Activated CD4-positive, alpha-beta T cell treated with anti-CD3 and anti-CD28 coated beads for 36 hours (primary cell): ENCODE measurements at regions of chr2 and their contacts with region 1.

Region 1: GRCh38 chr2:74334931-74335333 is 8.3 kb downstream of the SLC4A5 start:
- DNase-seq: peak; percentile 86
- ATAC-seq: peak; percentile 81
- H3K4me3 Mint-ChIP-seq: no peak overlapping the region
- H3K27ac Mint-ChIP-seq: no peak overlapping the region
- H3K4me1 Mint-ChIP-seq: no peaks in the 10 kb centered on the region
- H3K27me3 Mint-ChIP-seq: no peaks in the 10 kb centered on the region

Region 2: DNA sequence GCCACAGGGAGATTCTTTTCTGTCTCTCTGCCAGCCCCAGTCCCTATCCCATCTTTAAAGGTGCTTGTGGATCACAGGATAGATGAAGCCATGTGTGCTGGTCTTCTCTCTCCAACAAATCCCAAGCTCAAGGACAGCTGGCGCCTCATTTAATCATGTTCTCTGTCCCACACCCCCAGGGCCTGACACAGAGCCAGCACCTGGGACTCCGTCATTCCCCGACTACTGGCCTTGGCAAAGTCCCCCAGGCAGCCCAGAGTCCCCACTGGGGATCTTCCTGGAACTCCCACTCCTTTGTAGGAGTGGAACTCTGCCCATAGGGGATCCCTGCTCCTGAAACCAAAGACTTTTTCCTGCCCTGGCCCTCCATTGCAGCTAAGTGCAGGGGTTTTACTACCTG is 75.7 kb before region 1 on chr2:
- CTCF ChIA-PET with region 1: interaction called, 22 read pairs
- POLR2A ChIA-PET with region 1: no interaction called
- intact Hi-C with region 1: no loop called
- DNase-seq: no peak
- ATAC-seq: no peak
- H3K4me3 Mint-ChIP-seq: no peak overlapping the region
- H3K27ac Mint-ChIP-seq: no peak overlapping the region
- H3K4me1 Mint-ChIP-seq: no peaks in the 10 kb centered on the region
- H3K27me3 Mint-ChIP-seq: no peaks in the 10 kb centered on the region

Region 3: DNA sequence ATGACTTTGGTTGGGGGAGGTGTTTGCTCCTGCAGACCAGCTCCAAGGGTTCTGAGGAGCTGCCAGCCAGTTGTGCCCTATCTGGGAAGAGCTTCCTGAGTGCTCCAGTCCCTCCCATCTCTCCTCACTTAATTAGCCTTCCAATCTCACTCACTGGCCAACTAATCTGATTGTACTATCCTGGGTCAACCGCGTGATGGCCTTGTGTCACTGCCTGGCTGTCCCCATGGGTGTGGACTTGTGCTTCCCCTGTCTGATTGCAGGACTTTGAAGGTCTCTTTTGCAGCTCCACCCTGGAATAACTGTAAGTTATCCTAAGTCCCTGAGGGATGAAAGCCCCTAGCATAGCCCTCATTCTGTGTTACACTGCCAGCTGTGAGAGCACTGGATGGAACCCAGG is 56.8 kb before region 1 on chr2:
- CTCF ChIA-PET with region 1: interaction called, 18 read pairs
- POLR2A ChIA-PET with region 1: no interaction called
- intact Hi-C with region 1: no loop called
- DNase-seq: no peak
- ATAC-seq: no peak
- H3K4me3 Mint-ChIP-seq: no peak overlapping the region
- H3K27ac Mint-ChIP-seq: no peak overlapping the region
- H3K4me1 Mint-ChIP-seq: no peaks in the 10 kb centered on the region
- H3K27me3 Mint-ChIP-seq: no peaks in the 10 kb centered on the region

Region 4: GRCh38 chr2:74321737-74322136 is 13.2 kb before region 1 on chr2:
- CTCF ChIA-PET with region 1: interaction called, 33 read pairs
- POLR2A ChIA-PET with region 1: no interaction called
- intact Hi-C with region 1: no loop called
- DNase-seq: no peak
- ATAC-seq: no peak
- H3K4me3 Mint-ChIP-seq: no peak overlapping the region
- H3K27ac Mint-ChIP-seq: no peak overlapping the region
- H3K4me1 Mint-ChIP-seq: no peaks in the 10 kb centered on the region
- H3K27me3 Mint-ChIP-seq: no peaks in the 10 kb centered on the region

Region 5: DNA sequence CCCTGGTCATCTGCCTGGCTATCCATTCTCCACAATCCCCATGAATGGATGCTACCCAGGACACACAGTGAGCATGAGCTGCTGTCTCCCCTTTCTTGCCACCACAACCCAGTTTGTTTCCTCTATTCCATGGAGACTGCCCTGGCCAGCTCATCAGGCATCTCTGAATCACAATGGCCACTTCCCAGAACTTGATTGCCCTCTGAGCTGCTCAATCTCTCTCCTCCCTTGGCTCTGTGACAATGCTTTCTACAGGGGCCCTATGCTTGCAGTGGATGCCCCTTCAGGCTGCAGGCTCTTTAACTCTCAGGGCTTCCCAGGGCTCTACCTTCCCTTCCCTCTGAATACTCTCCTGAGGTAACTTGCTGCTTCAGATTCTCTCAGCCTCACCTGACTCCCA is 22.7 kb after region 1 on chr2:
- CTCF ChIA-PET with region 1: interaction called, 23 read pairs
- POLR2A ChIA-PET with region 1: no interaction called
- intact Hi-C with region 1: no loop called
- DNase-seq: no peak
- ATAC-seq: no peak
- H3K4me3 Mint-ChIP-seq: no peak overlapping the region
- H3K27ac Mint-ChIP-seq: no peak overlapping the region
- H3K4me1 Mint-ChIP-seq: no peaks in the 10 kb centered on the region
- H3K27me3 Mint-ChIP-seq: no peaks in the 10 kb centered on the region

Region 6: GRCh38 chr2:74399785-74400184 is 64.9 kb after region 1 on chr2:
- CTCF ChIA-PET with region 1: interaction called, 11 read pairs
- POLR2A ChIA-PET with region 1: no interaction called
- intact Hi-C with region 1: no loop called
- DNase-seq: no peak
- ATAC-seq: peak; percentile 76
- H3K4me3 Mint-ChIP-seq: no peak overlapping the region
- H3K27ac Mint-ChIP-seq: no peak overlapping the region
- H3K4me1 Mint-ChIP-seq: no peaks in the 10 kb centered on the region
- H3K27me3 Mint-ChIP-seq: peaks cover 2% of the 10 kb centered on the region